MCF 10A (cell line): ENCODE measurements at regions of chr1 and their contacts with region 1.

Region 1: GRCh38 chr1:58710190-58711085 is 10.6 kb upstream of the MYSM1 start:
- DNase-seq: no peak
- H3K4me3 Mint-ChIP-seq: no peak overlapping the region
- H3K27ac Mint-ChIP-seq: peak overlapping the region; percentile 87
- H3K4me1 Mint-ChIP-seq: no peaks in the 10 kb centered on the region
- H3K27me3 Mint-ChIP-seq: no peaks in the 10 kb centered on the region
- CTCF ChIP-seq: no peak

Region 2: GRCh38 chr1:58539553-58539952 is 170.9 kb before region 1 on chr1:
- CTCF ChIA-PET with region 1: no interaction called
- POLR2A ChIA-PET with region 1: no interaction called
- intact Hi-C with region 1: no loop called
- DNase-seq: no peak
- H3K4me3 Mint-ChIP-seq: no peak overlapping the region
- H3K27ac Mint-ChIP-seq: no peak overlapping the region
- H3K4me1 Mint-ChIP-seq: no peaks in the 10 kb centered on the region
- H3K27me3 Mint-ChIP-seq: no peaks in the 10 kb centered on the region
- CTCF ChIP-seq: no peak

Region 3: DNA sequence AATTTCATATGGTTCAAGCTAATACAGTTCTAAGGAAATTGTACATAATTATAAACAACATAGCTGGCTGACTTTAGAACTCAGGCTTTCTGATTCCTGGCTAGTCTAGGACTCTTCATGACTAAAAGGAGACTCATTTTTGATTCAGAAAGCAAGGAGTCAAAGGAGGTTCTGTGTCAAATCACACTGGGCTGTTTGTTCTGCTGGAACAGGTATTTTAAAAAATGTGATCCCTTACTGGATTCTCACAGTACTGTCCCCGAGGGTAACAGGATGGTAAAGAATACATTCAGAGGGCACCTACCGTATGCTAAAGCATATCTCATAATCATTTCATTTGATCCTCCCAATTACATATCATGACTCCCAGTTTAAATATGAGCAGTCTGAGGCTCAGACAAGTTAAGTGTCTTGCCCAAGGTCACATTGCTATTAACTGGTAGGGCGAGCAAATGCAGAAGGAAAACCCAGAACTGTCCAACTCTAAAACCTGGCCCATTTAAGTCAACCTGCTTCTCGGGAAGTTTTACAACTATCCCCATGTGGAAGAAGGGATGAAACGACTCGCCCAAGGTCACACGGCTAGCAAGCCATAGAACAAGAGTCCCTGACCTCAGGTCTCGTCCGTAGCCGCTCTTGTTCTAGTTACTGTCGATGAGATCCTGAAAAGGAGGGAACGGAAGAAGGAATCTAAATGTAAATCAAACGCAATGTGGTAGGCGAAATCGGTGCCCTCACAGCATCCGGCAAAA is 11.3 kb before region 1 on chr1:
- CTCF ChIA-PET with region 1: interaction called, 12 read pairs
- POLR2A ChIA-PET with region 1: interaction called, 24 read pairs
- intact Hi-C with region 1: no loop called
- DNase-seq: peak; percentile 34
- H3K4me3 Mint-ChIP-seq: peak overlapping the region; percentile 91
- H3K27ac Mint-ChIP-seq: peak overlapping the region; percentile 99
- H3K4me1 Mint-ChIP-seq: no peaks in the 10 kb centered on the region
- H3K27me3 Mint-ChIP-seq: no peaks in the 10 kb centered on the region
- CTCF ChIP-seq: no peak